CD14-positive monocyte (primary cell): ENCODE measurements at regions of chr17 and their contacts with region 1.

Region 1: GRCh38 chr17:29579866-29580771 is 9.3 kb downstream of the GIT1 start:
- DNase-seq: peak; percentile 86 to 91 (median 88)
- H3K4me3 ChIP-seq: no peak overlapping the region
- H3K4me3 Mint-ChIP-seq: no peak overlapping the region
- H3K27ac ChIP-seq: no peak overlapping the region
- H3K27ac Mint-ChIP-seq: peak overlapping the region in 3 of 7 donors; percentile 10 to 51 (median 45)
- H3K4me1 ChIP-seq: peaks cover 13% of the 10 kb centered on the region in 2 donors
- H3K4me1 Mint-ChIP-seq: peaks cover 16% of the 10 kb centered on the region
- H3K27me3 ChIP-seq: no peaks in the 10 kb centered on the region
- H3K27me3 Mint-ChIP-seq: no peaks in the 10 kb centered on the region
- CTCF ChIP-seq: peak; percentile 84

Region 2: DNA sequence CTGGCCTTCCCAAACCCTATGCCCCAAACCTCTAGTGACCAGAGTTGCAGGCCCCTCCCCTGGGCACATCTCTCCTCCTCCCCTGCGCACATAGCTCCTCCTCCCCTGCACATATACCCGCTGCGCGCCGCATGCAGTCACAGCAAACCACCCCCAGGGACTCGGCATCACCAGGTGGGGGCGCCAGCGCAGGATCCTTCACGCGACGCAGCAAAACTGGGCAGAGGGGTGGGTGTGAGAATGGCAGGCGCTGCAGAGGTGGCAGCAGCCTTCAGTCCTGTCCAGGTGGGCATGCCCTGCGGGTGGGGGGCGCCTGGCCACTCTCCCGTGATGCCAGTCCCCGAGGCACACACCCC is 37.0 kb after region 1 on chr17:
- intact Hi-C with region 1: loop called in 1 of 2 experiments (anchors 2 kb)
- DNase-seq: peak; percentile 67 to 84 (median 81)
- H3K4me3 ChIP-seq: peak overlapping the region in 2 of 3 experiments; percentile 31 to 80
- H3K4me3 Mint-ChIP-seq: peak overlapping the region; percentile 83 to 92
- H3K27ac ChIP-seq: no peak overlapping the region
- H3K27ac Mint-ChIP-seq: no peak overlapping the region
- H3K4me1 ChIP-seq: peaks cover 57 to 63% of the 10 kb centered on the region in 2 donors
- H3K4me1 Mint-ChIP-seq: peaks cover 49% of the 10 kb centered on the region
- H3K27me3 ChIP-seq: peaks cover 7 to 80% of the 10 kb centered on the region in 2 donors
- H3K27me3 Mint-ChIP-seq: peaks cover 47 to 91% (median 63%) of the 10 kb centered on the region in 3 donors
- CTCF ChIP-seq: peak; percentile 60

Region 3: GRCh38 chr17:29659155-29659554 is 79.0 kb after region 1 on chr17:
- intact Hi-C with region 1: no loop called
- DNase-seq: no peak
- H3K4me3 ChIP-seq: no peak overlapping the region
- H3K4me3 Mint-ChIP-seq: no peak overlapping the region
- H3K27ac ChIP-seq: peak overlapping the region in 1 of 2 donors; percentile 13
- H3K27ac Mint-ChIP-seq: peak overlapping the region in 2 of 7 donors; percentile 53 to 63
- H3K4me1 ChIP-seq: peaks cover 7 to 11% of the 10 kb centered on the region in 2 donors
- H3K4me1 Mint-ChIP-seq: peaks cover 8% of the 10 kb centered on the region
- H3K27me3 ChIP-seq: no peaks in the 10 kb centered on the region
- H3K27me3 Mint-ChIP-seq: no peaks in the 10 kb centered on the region
- CTCF ChIP-seq: no peak

Region 4: GRCh38 chr17:29931231-29931932 is 351.3 kb after region 1 on chr17:
- intact Hi-C with region 1: loop called in 1 of 2 experiments (anchors 10 kb)
- DNase-seq: peak; percentile 52 to 84 (median 75)
- H3K4me3 ChIP-seq: peak overlapping the region; percentile 72 to 92 (median 91)
- H3K4me3 Mint-ChIP-seq: no peak overlapping the region
- H3K27ac ChIP-seq: no peak overlapping the region
- H3K27ac Mint-ChIP-seq: no peak overlapping the region
- H3K4me1 ChIP-seq: peaks cover 23 to 32% of the 10 kb centered on the region in 2 donors
- H3K4me1 Mint-ChIP-seq: peaks cover 25% of the 10 kb centered on the region
- H3K27me3 ChIP-seq: no peaks in the 10 kb centered on the region
- H3K27me3 Mint-ChIP-seq: peaks cover 0 to 5% (median 0%) of the 10 kb centered on the region in 3 donors
- CTCF ChIP-seq: peak; percentile 94

Region 5: GRCh38 chr17:30093463-30094147 is 513.5 kb after region 1 on chr17:
- intact Hi-C with region 1: loop called in 1 of 2 experiments (anchors 5 kb)
- DNase-seq: peak; percentile 41 to 66 (median 53)
- H3K4me3 ChIP-seq: no peak overlapping the region
- H3K4me3 Mint-ChIP-seq: no peak overlapping the region
- H3K27ac ChIP-seq: no peak overlapping the region
- H3K27ac Mint-ChIP-seq: no peak overlapping the region
- H3K4me1 ChIP-seq: peaks cover 0 to 3% of the 10 kb centered on the region in 2 donors
- H3K4me1 Mint-ChIP-seq: peaks cover 11% of the 10 kb centered on the region
- H3K27me3 ChIP-seq: no peaks in the 10 kb centered on the region
- H3K27me3 Mint-ChIP-seq: peaks cover 0 to 6% (median 0%) of the 10 kb centered on the region in 3 donors
- CTCF ChIP-seq: peak; percentile 90